ENCODE measurements at regions of chr5 and their contacts with region 1.

Region 1: DNA sequence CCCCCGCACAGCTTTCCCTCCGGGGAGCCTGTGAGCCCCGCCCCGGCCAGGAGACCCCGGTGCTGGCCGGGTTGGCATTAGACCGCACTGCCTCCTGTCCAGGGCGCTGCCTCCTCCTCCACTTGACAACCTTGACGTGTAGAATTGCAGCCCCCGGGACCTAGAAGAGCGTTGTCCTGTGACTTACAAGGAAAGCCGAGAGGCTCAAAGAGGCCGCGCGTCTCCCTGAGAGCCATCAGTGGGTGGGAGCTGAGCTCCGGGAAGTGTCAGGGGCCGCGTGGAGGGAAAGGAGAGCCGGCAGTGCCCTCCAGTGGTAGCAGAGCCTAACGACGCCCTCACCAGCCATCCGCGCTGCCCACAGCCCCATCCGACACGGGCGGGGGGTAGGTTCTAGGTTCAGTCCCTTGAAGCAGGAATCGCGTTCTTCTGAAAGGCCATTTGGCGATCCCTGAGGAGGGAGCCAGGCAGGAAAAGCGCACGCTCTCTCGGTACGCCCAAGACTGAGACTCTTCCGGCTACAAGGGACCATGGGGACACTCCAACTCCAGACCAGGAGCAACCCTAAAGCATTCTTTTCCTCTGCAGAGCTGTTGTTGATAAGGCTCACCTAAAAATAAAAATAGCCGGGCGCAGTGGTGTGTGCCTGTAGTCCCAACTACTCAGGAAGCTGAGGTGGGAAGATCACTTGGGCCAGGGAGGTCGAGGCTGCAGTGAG is 40.6 kb upstream of the SAP30L start:
- DNase-seq: no peak
- ATAC-seq: peak; percentile 100
- H3K4me3 ChIP-seq: no peak overlapping the region
- H3K27ac ChIP-seq: 0 out of 2 replicates have a peak overlapping the region, but pooled peaks have one; percentile 11
- H3K4me1 ChIP-seq: peaks cover 4% of the 10 kb centered on the region; the same call in 1 of the 2 replicates
- H3K27me3 ChIP-seq: no peaks in the 10 kb centered on the region
- CTCF ChIP-seq: peak; percentile 83 to 91 (median 90)
- EP300 ChIP-seq: no peak
- POLR2A ChIP-seq: peak; percentile 44; the same call in 1 of the 2 replicates
- RAD21 ChIP-seq: peak; percentile 92

Region 2: DNA sequence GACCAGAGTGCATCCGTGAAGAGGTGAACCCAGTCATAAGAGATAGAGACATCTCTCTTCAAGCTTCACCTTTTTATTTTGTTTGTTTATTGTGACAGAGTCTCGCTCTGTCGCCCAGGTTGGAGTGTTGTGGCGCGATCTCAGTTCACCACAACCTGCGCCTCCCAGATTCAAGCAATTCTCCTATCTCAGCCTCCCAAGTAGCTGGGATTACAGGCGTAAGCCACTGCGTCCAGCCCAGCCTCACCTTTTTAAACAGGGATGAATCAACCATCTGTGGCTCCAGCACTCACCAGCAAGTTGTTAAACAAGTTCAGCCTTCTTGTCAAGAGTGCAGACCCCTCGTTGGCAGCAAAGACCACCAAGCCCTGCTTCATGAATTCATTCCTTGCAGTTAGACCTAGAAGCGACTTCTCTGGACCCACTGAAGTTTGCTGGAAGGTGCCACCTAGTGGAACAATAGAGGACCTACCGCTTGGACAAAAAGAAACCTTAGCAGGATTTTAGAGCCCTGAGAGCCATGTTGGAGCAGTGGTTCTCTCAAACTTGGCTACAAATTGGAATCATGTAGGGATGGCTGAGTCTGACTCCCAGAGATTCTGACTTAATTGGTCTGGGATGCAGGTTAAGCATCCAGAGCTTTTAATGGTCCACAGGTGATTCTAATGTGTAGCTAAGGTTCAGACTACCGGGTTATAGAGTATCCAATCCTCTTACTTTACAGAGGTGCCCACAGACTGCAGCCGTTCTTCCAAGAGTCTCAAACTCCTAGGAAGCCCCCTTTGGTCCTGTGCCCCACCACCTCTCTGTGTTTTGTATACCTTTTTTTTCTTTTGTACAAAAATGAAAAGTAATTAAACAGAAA is 225.2 kb before region 1 on chr5:
- CTCF ChIA-PET with region 1: interaction called, 51 read pairs
- POLR2A ChIA-PET with region 1: no interaction called
- RAD21 ChIA-PET with region 1: interaction called, 16 read pairs
- SMC1A ChIA-PET with region 1: interaction called, 28 read pairs
- in situ Hi-C with region 1: loop called (anchors 5 kb)
- intact Hi-C with region 1: loop called (anchors 1 kb)
- DNase-seq: no peak
- ATAC-seq: peak; percentile 99
- H3K4me3 ChIP-seq: no peak overlapping the region
- H3K27ac ChIP-seq: no peak overlapping the region
- H3K4me1 ChIP-seq: no peaks in the 10 kb centered on the region
- H3K27me3 ChIP-seq: no peaks in the 10 kb centered on the region
- CTCF ChIP-seq: peak; percentile 74 to 84 (median 80)
- EP300 ChIP-seq: no peak
- POLR2A ChIP-seq: no peak
- RAD21 ChIP-seq: peak; percentile 89

Region 3: DNA sequence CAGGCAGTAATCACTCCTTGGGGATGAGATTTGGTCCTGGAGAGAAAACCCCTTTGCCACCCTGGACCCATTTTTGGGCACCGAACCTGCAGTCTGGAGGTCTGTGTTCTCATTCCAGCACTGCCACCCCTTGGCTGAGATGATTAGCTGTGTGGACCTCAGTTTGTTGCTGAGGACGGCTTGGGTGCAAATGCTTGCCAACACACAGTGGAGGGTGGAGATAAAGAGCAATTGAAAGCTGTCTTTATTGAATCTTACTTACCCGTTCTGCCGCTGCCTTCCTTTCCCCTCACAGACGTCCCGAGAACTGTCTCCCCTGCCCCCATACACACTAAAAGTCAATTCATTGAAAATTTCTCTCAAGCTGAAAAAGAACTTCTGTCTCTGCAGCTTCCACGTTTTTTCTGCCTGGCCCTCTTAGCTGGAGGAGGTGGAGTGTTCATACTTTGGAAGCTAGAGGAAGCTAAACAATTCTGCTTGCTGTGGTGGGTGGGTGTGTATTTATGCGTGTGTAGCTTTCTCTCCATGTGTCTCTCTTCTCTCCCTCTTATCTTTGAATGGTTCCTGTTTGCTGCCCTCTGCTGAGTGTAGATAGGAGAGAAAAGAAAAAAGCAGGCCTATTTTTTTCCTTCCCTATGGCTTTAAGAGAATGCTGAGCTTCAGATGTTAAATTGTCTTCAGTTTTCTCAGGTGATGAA is 208.1 kb before region 1 on chr5:
- CTCF ChIA-PET with region 1: interaction called, 71 read pairs
- POLR2A ChIA-PET with region 1: no interaction called
- RAD21 ChIA-PET with region 1: interaction called, 51 read pairs
- SMC1A ChIA-PET with region 1: interaction called, 45 read pairs
- in situ Hi-C with region 1: no loop called
- intact Hi-C with region 1: loop called (anchors 2 kb)
- DNase-seq: no peak
- ATAC-seq: peak; percentile 35
- H3K4me3 ChIP-seq: no peak overlapping the region
- H3K27ac ChIP-seq: no peak overlapping the region
- H3K4me1 ChIP-seq: peaks cover 32% of the 10 kb centered on the region
- H3K27me3 ChIP-seq: no peaks in the 10 kb centered on the region
- CTCF ChIP-seq: peak in 2 of 3 experiments; percentile 8 to 35; a peak in 3 of 6 replicates
- EP300 ChIP-seq: no peak
- POLR2A ChIP-seq: no peak
- RAD21 ChIP-seq: peak; percentile 28; the same call in 1 of the 2 replicates

Region 4: GRCh38 chr5:154238776-154239481 is 166.3 kb before region 1 on chr5:
- CTCF ChIA-PET with region 1: interaction called, 35 read pairs
- POLR2A ChIA-PET with region 1: interaction called, 4 read pairs
- RAD21 ChIA-PET with region 1: interaction called, 20 read pairs
- SMC1A ChIA-PET with region 1: interaction called, 17 read pairs
- in situ Hi-C with region 1: no loop called
- intact Hi-C with region 1: loop called (anchors 1 kb)
- DNase-seq: peak; percentile 63
- ATAC-seq: peak; percentile 76
- H3K4me3 ChIP-seq: no peak overlapping the region
- H3K27ac ChIP-seq: peak overlapping the region; percentile 57
- H3K4me1 ChIP-seq: peaks cover 59% of the 10 kb centered on the region
- H3K27me3 ChIP-seq: no peaks in the 10 kb centered on the region
- CTCF ChIP-seq: no peak
- EP300 ChIP-seq: no peak
- POLR2A ChIP-seq: no peak
- RAD21 ChIP-seq: no peak

Region 5: GRCh38 chr5:154334406-154335064 is 70.7 kb before region 1 on chr5:
- CTCF ChIA-PET with region 1: interaction called, 18 read pairs
- POLR2A ChIA-PET with region 1: no interaction called
- RAD21 ChIA-PET with region 1: interaction called, 14 read pairs
- SMC1A ChIA-PET with region 1: interaction called, 8 read pairs
- in situ Hi-C with region 1: no loop called
- intact Hi-C with region 1: loop called (anchors 2 kb)
- DNase-seq: no peak
- ATAC-seq: no peak
- H3K4me3 ChIP-seq: no peak overlapping the region
- H3K27ac ChIP-seq: no peak overlapping the region
- H3K4me1 ChIP-seq: no peaks in the 10 kb centered on the region
- H3K27me3 ChIP-seq: no peaks in the 10 kb centered on the region
- CTCF ChIP-seq: no peak
- EP300 ChIP-seq: no peak
- POLR2A ChIP-seq: no peak
- RAD21 ChIP-seq: no peak

Region 6: DNA sequence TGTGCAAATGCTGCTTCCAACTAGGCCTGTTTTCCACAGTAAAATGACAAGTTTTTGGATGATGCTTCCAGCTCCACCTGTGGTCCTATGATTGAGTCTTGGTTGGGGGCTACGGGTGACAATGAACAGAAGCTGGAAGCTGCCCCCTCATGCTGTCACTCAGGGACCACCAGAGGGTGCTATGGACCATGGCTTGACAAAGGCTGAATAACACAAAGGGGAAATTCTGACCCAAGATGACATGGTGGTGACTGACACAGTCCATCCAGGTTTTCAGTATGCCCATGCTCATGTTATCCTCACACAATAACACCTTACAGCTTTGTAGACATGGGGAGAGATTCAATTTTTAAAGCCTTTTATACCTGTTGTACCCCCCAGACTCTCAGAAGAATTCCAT is 16.6 kb after region 1 on chr5:
- CTCF ChIA-PET with region 1: interaction called, 15 read pairs
- POLR2A ChIA-PET with region 1: interaction called, 4 read pairs
- RAD21 ChIA-PET with region 1: interaction called, 4 read pairs
- SMC1A ChIA-PET with region 1: interaction called, 16 read pairs
- in situ Hi-C with region 1: no loop called
- intact Hi-C with region 1: no loop called
- DNase-seq: no peak
- ATAC-seq: peak; percentile 86
- H3K4me3 ChIP-seq: no peak overlapping the region
- H3K27ac ChIP-seq: no peak overlapping the region
- H3K4me1 ChIP-seq: peaks cover 2% of the 10 kb centered on the region; the same call in 1 of the 2 replicates
- H3K27me3 ChIP-seq: no peaks in the 10 kb centered on the region
- CTCF ChIP-seq: peak; percentile 53 to 64 (median 56)
- EP300 ChIP-seq: no peak
- POLR2A ChIP-seq: no peak
- RAD21 ChIP-seq: peak; percentile 56

Region 7: DNA sequence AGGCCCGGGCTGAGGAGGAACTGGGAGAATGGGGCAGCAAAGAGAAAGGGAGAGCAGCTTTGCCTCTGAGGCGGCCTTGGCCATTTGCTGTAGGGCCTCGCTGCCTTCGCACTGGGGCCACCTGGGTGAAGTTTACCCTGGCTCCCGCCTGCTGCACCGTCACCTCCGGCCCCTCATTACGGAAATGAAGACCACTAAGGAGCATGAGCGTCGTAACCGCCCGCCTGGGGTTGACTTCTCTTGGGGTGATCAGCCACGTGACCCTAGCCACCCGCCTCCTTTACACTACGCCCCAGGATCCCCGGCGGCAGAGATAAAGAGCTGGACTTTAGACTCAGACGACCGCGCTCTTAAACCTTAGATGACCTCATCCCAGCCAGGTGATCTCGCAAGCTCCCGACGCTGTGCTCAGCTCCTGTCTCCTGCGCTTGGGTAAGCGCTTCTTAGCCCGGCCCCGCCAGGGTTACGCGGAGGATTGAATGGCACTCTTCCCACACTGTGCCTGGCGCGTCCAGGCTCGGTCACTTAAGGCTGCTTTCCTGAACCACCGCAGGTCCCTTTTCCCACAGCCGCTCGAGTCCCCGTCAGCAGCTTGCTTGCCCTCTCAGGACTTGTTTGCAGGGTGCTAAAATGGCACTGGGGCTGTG is 242.0 kb after region 1 on chr5:
- CTCF ChIA-PET with region 1: no interaction called
- POLR2A ChIA-PET with region 1: no interaction called
- RAD21 ChIA-PET with region 1: no interaction called
- SMC1A ChIA-PET with region 1: no interaction called
- in situ Hi-C with region 1: no loop called
- intact Hi-C with region 1: no loop called
- DNase-seq: no peak
- ATAC-seq: peak; percentile 90
- H3K4me3 ChIP-seq: peak overlapping the region; percentile 40; the same call in 1 of the 2 replicates
- H3K27ac ChIP-seq: no peak overlapping the region
- H3K4me1 ChIP-seq: peaks cover 4% of the 10 kb centered on the region
- H3K27me3 ChIP-seq: peaks cover 0 to 3% of the 10 kb centered on the region in 2 experiments; a peak in 2 of 4 replicates
- CTCF ChIP-seq: no peak
- EP300 ChIP-seq: no peak
- POLR2A ChIP-seq: no peak
- RAD21 ChIP-seq: no peak

Measured in GM12878 (cell line).